CD4-positive, alpha-beta T cell (primary cell): ENCODE measurements at regions of chr5 and their contacts with region 1.

Region 1: GRCh38 chr5:90503596-90503995 is 25.8 kb downstream of the LYSMD3 start:
- DNase-seq: no peak
- ATAC-seq: no peak
- H3K4me3 ChIP-seq: no peak overlapping the region
- H3K4me3 Mint-ChIP-seq: no peak overlapping the region
- H3K27ac ChIP-seq: no peak overlapping the region
- H3K27ac Mint-ChIP-seq: no peak overlapping the region
- H3K4me1 ChIP-seq: no peaks in the 10 kb centered on the region
- H3K4me1 Mint-ChIP-seq: no peaks in the 10 kb centered on the region
- H3K27me3 ChIP-seq: no peaks in the 10 kb centered on the region
- H3K27me3 Mint-ChIP-seq: no peaks in the 10 kb centered on the region
- CTCF ChIP-seq: no peak

Region 2: DNA sequence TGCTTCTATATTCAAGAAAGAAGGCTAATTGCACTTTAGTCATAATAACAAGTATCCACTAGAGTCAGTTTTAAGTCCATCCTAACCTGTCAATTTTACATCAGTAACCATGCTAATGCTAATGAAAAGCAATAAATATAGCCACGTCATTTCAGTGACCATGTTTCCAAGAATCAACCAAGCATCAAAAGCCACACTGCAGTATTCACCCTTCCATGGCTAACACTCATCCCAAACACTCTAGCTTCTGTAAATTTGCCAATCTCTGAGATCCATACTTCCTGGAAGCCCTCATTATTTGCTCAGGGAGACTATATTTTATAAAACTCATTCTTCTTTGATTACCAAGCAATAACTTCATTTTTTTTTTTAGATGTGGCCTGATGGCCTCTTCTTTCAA is 806.0 kb before region 1 on chr5:
- CTCF ChIA-PET with region 1: no interaction called
- POLR2A ChIA-PET with region 1: no interaction called
- intact Hi-C with region 1: no loop called
- DNase-seq: no peak
- ATAC-seq: no peak
- H3K4me3 ChIP-seq: no peak overlapping the region
- H3K4me3 Mint-ChIP-seq: no peak overlapping the region
- H3K27ac ChIP-seq: no peak overlapping the region
- H3K27ac Mint-ChIP-seq: no peak overlapping the region
- H3K4me1 ChIP-seq: no peaks in the 10 kb centered on the region
- H3K4me1 Mint-ChIP-seq: no peaks in the 10 kb centered on the region
- H3K27me3 ChIP-seq: no peaks in the 10 kb centered on the region
- H3K27me3 Mint-ChIP-seq: no peaks in the 10 kb centered on the region
- CTCF ChIP-seq: no peak

Region 3: DNA sequence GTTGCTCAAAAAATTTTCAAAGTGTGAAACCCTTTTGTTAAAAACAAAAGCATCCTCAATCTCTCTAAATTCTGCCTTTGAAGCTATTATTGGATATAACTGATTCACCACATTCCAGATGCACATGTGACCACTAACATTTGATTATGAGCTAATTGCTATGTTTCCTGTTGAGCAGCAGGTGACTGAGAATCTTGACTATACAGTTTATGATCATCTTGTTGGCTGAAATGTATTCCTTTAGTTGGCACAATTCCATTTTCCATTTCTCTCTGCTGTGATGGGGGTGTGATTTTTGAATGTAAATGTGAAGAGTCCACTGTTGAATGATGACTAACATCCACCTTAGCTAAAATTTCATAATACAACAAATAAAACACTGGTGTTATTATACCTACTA is 15.1 kb after region 1 on chr5:
- CTCF ChIA-PET with region 1: no interaction called
- POLR2A ChIA-PET with region 1: interaction called, 3 read pairs
- intact Hi-C with region 1: loop called in 1 of 2 experiments (anchors 2 kb)
- DNase-seq: no peak
- ATAC-seq: no peak
- H3K4me3 ChIP-seq: no peak overlapping the region
- H3K4me3 Mint-ChIP-seq: no peak overlapping the region
- H3K27ac ChIP-seq: no peak overlapping the region
- H3K27ac Mint-ChIP-seq: no peak overlapping the region
- H3K4me1 ChIP-seq: no peaks in the 10 kb centered on the region
- H3K4me1 Mint-ChIP-seq: peaks cover 17% of the 10 kb centered on the region
- H3K27me3 ChIP-seq: no peaks in the 10 kb centered on the region
- H3K27me3 Mint-ChIP-seq: no peaks in the 10 kb centered on the region
- CTCF ChIP-seq: no peak

Region 4: DNA sequence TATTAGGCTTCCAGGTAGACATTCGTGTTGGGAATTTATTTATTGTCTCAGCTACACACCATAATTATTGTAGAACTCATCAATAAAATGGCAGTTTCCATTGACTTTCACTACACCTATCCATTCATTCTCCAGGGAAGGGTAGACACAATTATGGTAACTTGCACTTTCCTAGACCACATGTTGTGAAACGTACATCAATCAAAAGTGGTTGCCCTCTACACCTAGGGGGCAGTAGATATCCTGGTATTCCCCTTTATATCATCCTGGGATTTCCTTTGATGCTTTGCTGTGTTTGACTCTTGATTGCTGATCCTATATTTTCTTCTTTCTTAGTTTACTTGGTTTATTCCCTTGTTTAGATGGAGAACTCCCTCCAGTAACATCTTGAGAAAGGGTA is 102.9 kb after region 1 on chr5:
- CTCF ChIA-PET with region 1: no interaction called
- POLR2A ChIA-PET with region 1: no interaction called
- intact Hi-C with region 1: no loop called
- DNase-seq: no peak
- ATAC-seq: no peak
- H3K4me3 ChIP-seq: no peak overlapping the region
- H3K4me3 Mint-ChIP-seq: no peak overlapping the region
- H3K27ac ChIP-seq: no peak overlapping the region
- H3K27ac Mint-ChIP-seq: no peak overlapping the region
- H3K4me1 ChIP-seq: no peaks in the 10 kb centered on the region
- H3K4me1 Mint-ChIP-seq: no peaks in the 10 kb centered on the region
- H3K27me3 ChIP-seq: no peaks in the 10 kb centered on the region
- H3K27me3 Mint-ChIP-seq: peaks cover 41% of the 10 kb centered on the region
- CTCF ChIP-seq: no peak

Region 5: GRCh38 chr5:90658620-90659019 is 155.0 kb after region 1 on chr5:
- CTCF ChIA-PET with region 1: no interaction called
- POLR2A ChIA-PET with region 1: no interaction called
- intact Hi-C with region 1: no loop called
- DNase-seq: no peak
- ATAC-seq: no peak
- H3K4me3 ChIP-seq: no peak overlapping the region
- H3K4me3 Mint-ChIP-seq: no peak overlapping the region
- H3K27ac ChIP-seq: no peak overlapping the region
- H3K27ac Mint-ChIP-seq: no peak overlapping the region
- H3K4me1 ChIP-seq: no peaks in the 10 kb centered on the region
- H3K4me1 Mint-ChIP-seq: no peaks in the 10 kb centered on the region
- H3K27me3 ChIP-seq: no peaks in the 10 kb centered on the region
- H3K27me3 Mint-ChIP-seq: no peaks in the 10 kb centered on the region
- CTCF ChIP-seq: no peak